Mammary epithelial cell (primary cell): ENCODE measurements at regions of chr7 and their contacts with region 1.

Region 1: DNA sequence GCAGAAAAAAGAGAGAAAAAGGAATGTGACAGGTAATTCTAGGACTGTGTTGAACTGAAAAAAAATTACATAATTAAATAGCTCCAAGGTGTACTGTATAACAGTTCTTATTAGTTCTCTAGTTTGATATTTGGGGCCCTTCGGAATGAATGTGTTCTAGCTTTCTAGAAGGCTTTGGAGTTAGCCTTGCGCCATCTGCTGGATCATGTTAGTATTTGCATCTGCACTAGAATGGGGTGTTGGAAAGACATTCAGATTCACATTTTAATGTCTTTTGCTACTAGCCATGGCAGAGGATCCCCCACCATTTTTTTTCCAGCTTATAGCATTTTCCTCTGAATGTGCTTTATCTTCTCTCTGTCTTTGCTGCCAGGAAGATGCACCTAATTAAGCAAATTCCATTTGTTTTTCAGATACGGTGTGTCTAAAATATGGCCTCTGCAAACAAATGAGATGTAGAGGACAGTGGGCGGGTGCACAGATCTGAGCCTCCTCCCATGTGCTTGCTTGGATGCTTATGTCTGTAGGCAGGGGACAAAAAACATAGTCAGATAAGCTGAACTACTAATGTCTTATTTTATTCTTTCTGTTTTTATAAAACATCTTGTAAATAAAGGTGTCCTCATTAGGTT is 238.5 kb downstream of the PHF14 start:
- DNase-seq: peak; percentile 28
- H3K4me3 ChIP-seq: no peak overlapping the region
- H3K27ac ChIP-seq: no peak overlapping the region
- H3K4me1 ChIP-seq: no peaks in the 10 kb centered on the region
- H3K27me3 ChIP-seq: no peaks in the 10 kb centered on the region
- CTCF ChIP-seq: peak; percentile 76 to 82

Region 2: GRCh38 chr7:11343818-11344413 is 131.7 kb after region 1 on chr7:
- CTCF ChIA-PET with region 1: no interaction called
- dilution Hi-C with region 1: no loop called
- in situ Hi-C with region 1: no loop called
- intact Hi-C with region 1: loop called (anchors 1 kb)
- DNase-seq: peak; percentile 28
- H3K4me3 ChIP-seq: no peak overlapping the region
- H3K27ac ChIP-seq: no peak overlapping the region
- H3K4me1 ChIP-seq: no peaks in the 10 kb centered on the region
- H3K27me3 ChIP-seq: no peaks in the 10 kb centered on the region
- CTCF ChIP-seq: peak; percentile 65 to 70